ENCODE measurements at regions of chr12 and their contacts with region 1.

Region 1: DNA sequence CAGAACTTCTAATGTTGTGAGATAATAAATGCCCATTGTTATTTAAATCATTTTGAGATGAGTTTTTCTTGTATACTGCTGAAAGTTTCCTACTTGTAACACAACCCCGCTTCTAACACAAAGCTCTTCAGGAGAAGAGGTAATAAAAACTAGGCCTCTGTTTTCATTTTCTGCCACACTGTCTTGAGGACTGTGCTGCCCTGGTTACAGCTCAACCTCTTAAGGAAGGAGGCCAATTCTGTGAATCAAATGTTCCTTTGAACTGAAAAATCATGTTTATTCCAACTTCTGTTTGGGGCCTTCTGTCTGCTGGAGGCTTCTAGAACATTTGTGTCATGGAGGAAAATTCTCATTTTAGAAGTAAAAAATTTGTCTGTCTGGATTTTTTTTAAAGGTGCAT is 100.3 kb downstream of the LRIG3 start:
- DNase-seq: no peak
- ATAC-seq: no peak
- H3K4me3 ChIP-seq: no peak overlapping the region
- H3K27ac ChIP-seq: no peak overlapping the region
- H3K4me1 ChIP-seq: no peaks in the 10 kb centered on the region
- H3K27me3 ChIP-seq: no peaks in the 10 kb centered on the region
- CTCF ChIP-seq: no peak
- POLR2A ChIP-seq: no peak
- RAD21 ChIP-seq: no peak

Region 2: DNA sequence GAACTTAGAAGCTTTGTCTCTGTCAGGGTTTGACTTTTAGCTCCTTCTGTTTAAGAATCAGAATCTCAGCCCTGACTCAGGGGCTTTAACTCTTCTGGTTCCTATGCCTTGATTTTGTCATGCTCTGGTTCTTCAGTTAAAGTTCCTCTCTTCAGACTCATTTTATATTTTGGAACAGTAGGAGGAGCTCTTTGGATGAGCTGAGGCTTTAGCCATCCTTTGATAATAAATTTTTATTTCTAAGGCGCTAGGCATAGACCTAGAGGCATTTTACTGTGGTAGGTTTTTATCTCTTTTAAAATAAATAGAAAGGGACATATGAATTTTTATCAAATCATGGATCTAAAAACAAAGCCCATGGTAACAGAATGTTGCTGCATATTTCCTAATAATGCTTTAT is 827.0 kb before region 1 on chr12:
- CTCF ChIA-PET with region 1: no interaction called
- POLR2A ChIA-PET with region 1: no interaction called
- RAD21 ChIA-PET with region 1: no interaction called
- intact Hi-C with region 1: loop called (anchors 10 kb)
- DNase-seq: no peak
- ATAC-seq: no peak
- H3K4me3 ChIP-seq: no peak overlapping the region
- H3K27ac ChIP-seq: no peak overlapping the region
- H3K4me1 ChIP-seq: no peaks in the 10 kb centered on the region
- H3K27me3 ChIP-seq: no peaks in the 10 kb centered on the region
- CTCF ChIP-seq: 0 out of 6 replicates have a peak, but pooled peaks of 1 of the 3 experiments have one; percentile 3
- POLR2A ChIP-seq: no peak
- RAD21 ChIP-seq: peak; percentile 43

Region 3: DNA sequence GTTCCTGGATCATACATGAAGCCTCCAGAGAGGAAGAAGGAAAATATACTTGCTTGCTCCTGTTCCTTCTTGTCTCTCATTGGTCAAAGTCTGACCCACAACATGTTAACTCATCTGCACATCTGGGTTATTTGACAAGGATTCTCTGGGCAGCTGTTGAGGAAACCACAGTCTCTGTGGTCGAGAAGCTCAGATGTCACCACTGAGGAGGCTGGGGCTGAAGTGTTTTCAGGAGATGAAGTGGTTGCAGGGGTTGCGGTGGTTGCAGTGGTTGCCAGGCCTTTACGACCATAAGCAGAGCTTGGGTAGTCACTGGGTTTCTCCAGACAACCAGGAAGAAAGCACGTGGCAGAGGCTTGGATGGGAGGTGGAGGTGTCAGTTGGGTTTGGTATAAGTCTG is 365.3 kb after region 1 on chr12:
- CTCF ChIA-PET with region 1: no interaction called
- POLR2A ChIA-PET with region 1: no interaction called
- RAD21 ChIA-PET with region 1: no interaction called
- intact Hi-C with region 1: no loop called
- DNase-seq: no peak
- ATAC-seq: no peak
- H3K4me3 ChIP-seq: no peak overlapping the region
- H3K27ac ChIP-seq: no peak overlapping the region
- H3K4me1 ChIP-seq: no peaks in the 10 kb centered on the region
- H3K27me3 ChIP-seq: no peaks in the 10 kb centered on the region
- CTCF ChIP-seq: no peak
- POLR2A ChIP-seq: no peak
- RAD21 ChIP-seq: no peak

Measured in HCT116 (cell line).